CD8-positive, alpha-beta T cell (primary cell): ENCODE measurements at regions of chr13 and their contacts with region 1.

Region 1: DNA sequence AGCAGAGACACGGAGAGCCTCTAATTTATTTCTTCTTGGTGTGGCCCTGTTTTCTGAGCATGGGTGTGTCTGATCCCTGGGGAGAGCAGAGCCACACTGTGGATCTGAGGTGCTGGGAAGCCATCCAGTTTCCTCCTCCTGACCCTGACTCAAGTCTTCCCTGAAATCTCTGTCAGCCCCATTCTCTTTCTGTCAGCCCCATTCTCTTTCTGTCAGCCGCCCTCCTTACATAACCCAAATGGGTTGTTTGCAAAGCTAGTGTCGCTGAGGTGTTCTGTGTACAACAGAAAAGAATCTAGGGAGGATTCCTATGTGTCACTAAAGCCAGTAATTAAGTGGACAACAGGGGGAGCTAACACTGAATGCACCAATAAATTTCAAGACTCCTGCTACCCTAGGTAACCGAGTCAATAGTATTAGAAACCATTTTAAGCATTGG is 50.2 kb downstream of the LRCH1 start:
- DNase-seq: no peak
- ATAC-seq: no peak
- H3K4me3 ChIP-seq: no peak overlapping the region
- H3K4me3 Mint-ChIP-seq: no peak overlapping the region
- H3K27ac ChIP-seq: no peak overlapping the region
- H3K27ac Mint-ChIP-seq: no peak overlapping the region
- H3K4me1 ChIP-seq: peaks cover 36% of the 10 kb centered on the region
- H3K4me1 Mint-ChIP-seq: peaks cover 84% of the 10 kb centered on the region
- H3K27me3 ChIP-seq: no peaks in the 10 kb centered on the region
- H3K27me3 Mint-ChIP-seq: no peaks in the 10 kb centered on the region
- CTCF ChIP-seq: no peak

Region 2: DNA sequence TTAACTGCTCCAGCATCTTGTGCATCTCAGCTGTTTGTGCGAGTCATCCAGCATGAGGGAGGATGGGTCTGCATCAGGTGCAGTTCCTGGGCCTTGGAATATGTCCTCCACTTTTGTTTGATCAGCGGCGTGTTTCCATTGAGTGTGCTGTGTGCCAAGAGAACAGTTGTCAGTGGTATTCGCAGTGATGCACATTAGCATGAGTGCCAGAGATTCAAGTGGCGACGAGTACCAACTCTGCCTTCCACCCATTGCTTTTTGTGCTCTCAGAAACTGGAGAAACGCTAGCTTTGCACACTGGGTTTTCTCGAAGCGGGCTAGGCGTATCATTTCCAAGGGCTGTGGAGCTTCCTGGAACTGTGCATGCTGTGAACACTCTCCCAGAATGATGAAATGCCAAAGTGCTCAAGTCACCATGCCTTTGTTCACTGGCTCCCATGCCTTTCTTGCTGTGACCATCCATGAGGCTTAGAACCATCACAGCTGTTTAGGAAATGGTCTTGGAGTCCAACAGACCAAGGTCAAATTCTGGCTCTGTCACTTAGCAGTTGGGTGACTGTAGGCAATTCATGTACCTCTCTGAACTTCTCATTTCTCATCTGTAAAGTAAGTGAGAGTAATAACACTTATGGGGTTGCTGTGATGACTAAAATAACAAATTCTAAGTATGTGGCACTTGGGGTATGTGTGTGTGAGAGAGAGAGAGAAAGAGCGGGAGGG is 31.8 kb before region 1 on chr13:
- CTCF ChIA-PET with region 1: no interaction called
- POLR2A ChIA-PET with region 1: no interaction called
- intact Hi-C with region 1: loop called in 1 of 2 experiments (anchors 5 kb)
- DNase-seq: no peak
- ATAC-seq: no peak
- H3K4me3 ChIP-seq: no peak overlapping the region
- H3K4me3 Mint-ChIP-seq: no peak overlapping the region
- H3K27ac ChIP-seq: no peak overlapping the region
- H3K27ac Mint-ChIP-seq: no peak overlapping the region
- H3K4me1 ChIP-seq: no peaks in the 10 kb centered on the region
- H3K4me1 Mint-ChIP-seq: peaks cover 42% of the 10 kb centered on the region
- H3K27me3 ChIP-seq: no peaks in the 10 kb centered on the region
- H3K27me3 Mint-ChIP-seq: no peaks in the 10 kb centered on the region
- CTCF ChIP-seq: no peak

Region 3: DNA sequence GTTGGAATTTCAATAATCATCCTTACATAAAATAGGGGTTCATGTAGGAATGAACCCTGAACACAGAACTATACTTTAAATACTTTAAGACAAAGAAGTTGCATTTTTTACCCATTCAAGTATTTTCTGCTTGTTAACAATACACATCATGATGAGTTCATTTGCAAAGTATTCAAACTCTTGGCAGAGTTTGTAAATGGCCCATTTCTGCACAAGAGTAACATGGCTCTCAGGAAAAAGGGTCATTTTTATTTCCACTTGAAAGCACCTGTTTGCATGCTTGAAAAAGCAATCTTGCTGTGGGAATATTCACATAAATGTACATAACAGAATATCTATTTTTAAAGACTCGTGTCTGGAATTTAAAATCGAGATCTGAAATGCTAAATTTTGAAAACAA is 175.7 kb after region 1 on chr13:
- CTCF ChIA-PET with region 1: no interaction called
- POLR2A ChIA-PET with region 1: no interaction called
- intact Hi-C with region 1: no loop called
- DNase-seq: no peak
- ATAC-seq: no peak
- H3K4me3 ChIP-seq: no peak overlapping the region
- H3K4me3 Mint-ChIP-seq: no peak overlapping the region
- H3K27ac ChIP-seq: no peak overlapping the region
- H3K27ac Mint-ChIP-seq: no peak overlapping the region
- H3K4me1 ChIP-seq: no peaks in the 10 kb centered on the region
- H3K4me1 Mint-ChIP-seq: no peaks in the 10 kb centered on the region
- H3K27me3 ChIP-seq: no peaks in the 10 kb centered on the region
- H3K27me3 Mint-ChIP-seq: no peaks in the 10 kb centered on the region
- CTCF ChIP-seq: no peak

Region 4: DNA sequence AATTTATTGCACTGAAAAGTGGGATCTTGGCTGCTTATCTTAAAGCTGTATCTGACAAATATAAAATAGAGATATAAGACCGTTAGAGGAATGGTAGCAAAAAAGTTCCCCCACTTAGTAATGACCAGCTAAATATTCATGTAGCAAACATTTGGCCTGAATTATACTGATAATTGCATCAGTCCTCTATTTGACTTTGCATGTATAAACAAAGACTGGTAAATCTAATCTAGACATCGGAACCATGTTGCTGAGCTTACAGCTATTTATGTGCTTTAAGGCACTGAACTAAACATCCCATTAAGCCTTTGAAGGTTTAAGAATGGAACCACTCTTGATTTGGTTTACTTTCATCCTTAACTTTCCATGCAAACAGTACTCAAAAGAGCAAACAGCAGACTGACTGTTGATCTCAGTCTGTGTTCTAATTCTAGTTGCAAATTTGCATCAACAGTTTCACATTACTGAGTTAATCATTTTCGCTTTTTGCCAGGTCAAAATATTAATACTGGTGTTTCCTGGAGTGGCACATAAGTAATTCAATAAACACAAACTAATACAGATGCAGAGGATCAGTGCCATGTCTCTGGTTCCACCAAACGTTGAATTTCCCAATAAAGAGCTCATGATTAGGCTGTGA is 497.1 kb after region 1 on chr13:
- CTCF ChIA-PET with region 1: no interaction called
- POLR2A ChIA-PET with region 1: no interaction called
- intact Hi-C with region 1: no loop called
- DNase-seq: no peak
- ATAC-seq: no peak
- H3K4me3 ChIP-seq: no peak overlapping the region
- H3K4me3 Mint-ChIP-seq: no peak overlapping the region
- H3K27ac ChIP-seq: no peak overlapping the region
- H3K27ac Mint-ChIP-seq: no peak overlapping the region
- H3K4me1 ChIP-seq: no peaks in the 10 kb centered on the region
- H3K4me1 Mint-ChIP-seq: no peaks in the 10 kb centered on the region
- H3K27me3 ChIP-seq: no peaks in the 10 kb centered on the region
- H3K27me3 Mint-ChIP-seq: no peaks in the 10 kb centered on the region
- CTCF ChIP-seq: no peak